ENCODE measurements at regions of chr20 and their contacts with region 1.

Region 1: GRCh38 chr20:3710703-3711483 is 1.5 kb downstream of the SIGLEC1 start:
- DNase-seq: peak; percentile 57 to 88
- ATAC-seq: peak; percentile 20 to 83; a peak in 4 of 6 replicates
- H3K4me3 ChIP-seq: no peak overlapping the region
- H3K27ac ChIP-seq: no peak overlapping the region
- H3K4me1 ChIP-seq: no peaks in the 10 kb centered on the region
- CTCF ChIP-seq: peak; percentile 90
- EP300 ChIP-seq: no peak
- POLR2A ChIP-seq: no peak
- RAD21 ChIP-seq: peak; percentile 75 to 76

Region 2: GRCh38 chr20:3340443-3340842 is 370.4 kb before region 1 on chr20:
- CTCF ChIA-PET with region 1: no interaction called
- POLR2A ChIA-PET with region 1: no interaction called
- DNase-seq: no peak
- ATAC-seq: no peak
- H3K4me3 ChIP-seq: no peak overlapping the region
- H3K27ac ChIP-seq: no peak overlapping the region
- H3K4me1 ChIP-seq: no peaks in the 10 kb centered on the region
- CTCF ChIP-seq: no peak
- EP300 ChIP-seq: no peak
- POLR2A ChIP-seq: no peak
- RAD21 ChIP-seq: no peak

Region 3: GRCh38 chr20:3515379-3516170 is 195.3 kb before region 1 on chr20:
- CTCF ChIA-PET with region 1: no interaction called
- POLR2A ChIA-PET with region 1: no interaction called
- DNase-seq: no peak
- ATAC-seq: no peak
- H3K4me3 ChIP-seq: no peak overlapping the region
- H3K27ac ChIP-seq: no peak overlapping the region
- H3K4me1 ChIP-seq: no peaks in the 10 kb centered on the region
- CTCF ChIP-seq: no peak
- EP300 ChIP-seq: no peak
- POLR2A ChIP-seq: no peak
- RAD21 ChIP-seq: no peak

Region 4: DNA sequence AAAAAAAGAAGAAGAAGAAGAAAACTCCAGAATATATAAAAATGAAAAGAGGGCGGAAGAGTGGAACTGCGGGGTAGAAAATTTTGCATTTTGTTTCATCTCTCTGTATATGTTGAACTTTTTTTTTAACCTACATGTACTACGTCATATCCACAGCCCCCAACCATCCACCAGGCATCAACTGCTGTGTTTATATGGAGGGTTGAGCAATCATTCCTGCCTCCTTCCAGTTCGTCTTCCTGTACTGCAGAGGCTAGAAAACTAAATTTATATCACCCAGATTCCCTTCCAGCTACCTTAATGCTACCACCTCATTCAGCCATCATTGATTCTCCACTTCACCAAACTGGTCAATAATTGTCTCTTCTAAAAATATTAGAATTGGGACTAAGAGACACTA is 11.0 kb after region 1 on chr20:
- CTCF ChIA-PET with region 1: interaction called, 2,233 read pairs
- POLR2A ChIA-PET with region 1: no interaction called
- DNase-seq: no peak
- ATAC-seq: no peak
- H3K4me3 ChIP-seq: no peak overlapping the region
- H3K27ac ChIP-seq: no peak overlapping the region
- H3K4me1 ChIP-seq: no peaks in the 10 kb centered on the region
- CTCF ChIP-seq: no peak
- EP300 ChIP-seq: no peak
- POLR2A ChIP-seq: no peak
- RAD21 ChIP-seq: no peak

Region 5: DNA sequence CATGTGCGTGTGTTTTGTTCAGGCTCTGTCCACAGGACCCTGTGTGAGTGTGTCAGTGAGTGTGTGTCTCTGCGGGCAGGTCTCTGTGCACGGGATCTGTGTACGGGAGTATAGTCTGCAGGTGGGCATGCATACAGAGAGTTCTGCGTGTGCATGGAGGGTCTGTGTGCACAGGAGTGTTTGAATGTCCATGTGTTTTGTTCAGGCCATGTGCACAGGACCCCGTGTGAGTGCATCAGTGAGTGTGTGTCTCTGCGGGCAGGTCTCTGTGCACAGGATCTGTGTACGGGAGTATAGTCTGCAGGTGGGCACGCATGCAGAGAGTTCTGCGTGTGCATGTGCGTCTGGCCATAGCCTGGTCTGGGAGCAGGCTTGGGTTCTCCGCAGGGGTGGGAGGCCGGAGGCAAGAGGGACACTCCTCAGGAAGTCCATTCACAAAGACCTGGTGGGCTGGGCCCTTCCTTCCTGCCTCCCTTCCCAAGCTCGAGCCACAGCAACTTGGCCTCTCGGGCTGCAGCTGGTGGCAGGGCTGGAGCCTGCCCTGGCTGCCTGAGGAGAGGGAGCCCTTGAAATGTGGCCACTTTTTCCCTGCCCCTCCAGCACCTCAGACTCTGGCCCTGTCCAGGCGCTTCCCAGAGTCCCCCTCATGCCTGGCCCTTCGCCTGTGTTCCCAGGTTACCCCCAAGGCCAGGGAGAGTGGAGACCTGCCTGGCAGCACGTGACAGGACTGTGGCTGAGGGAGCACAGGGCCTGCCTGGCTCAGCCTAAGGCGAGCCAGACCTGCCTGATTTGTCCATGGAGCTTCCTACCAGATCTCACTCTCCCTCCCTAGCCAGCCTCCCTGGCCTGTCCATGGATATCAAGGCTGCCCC is 28.4 kb after region 1 on chr20:
- CTCF ChIA-PET with region 1: interaction called, 2,233 read pairs
- POLR2A ChIA-PET with region 1: no interaction called
- DNase-seq: no peak
- ATAC-seq: peak in 1 of 2 experiments; percentile 44; a peak in 4 of 6 replicates
- H3K4me3 ChIP-seq: no peak overlapping the region
- H3K27ac ChIP-seq: peak overlapping the region in 1 of 2 experiments; percentile 34; a peak in 2 of 6 replicates
- H3K4me1 ChIP-seq: peaks cover 15% of the 10 kb centered on the region; the same call in 2 of the 3 replicates
- CTCF ChIP-seq: no peak
- EP300 ChIP-seq: no peak
- POLR2A ChIP-seq: no peak
- RAD21 ChIP-seq: no peak

Region 6: GRCh38 chr20:3753098-3753980 is 42.4 kb after region 1 on chr20:
- CTCF ChIA-PET with region 1: interaction called, 2,233 read pairs
- POLR2A ChIA-PET with region 1: no interaction called
- DNase-seq: peak; percentile 85 to 89
- ATAC-seq: peak; percentile 28 to 62; a peak in 3 of 6 replicates
- H3K4me3 ChIP-seq: no peak overlapping the region
- H3K27ac ChIP-seq: no peak overlapping the region
- H3K4me1 ChIP-seq: peaks cover 7% of the 10 kb centered on the region; the same call in 2 of the 3 replicates
- CTCF ChIP-seq: peak; percentile 81
- EP300 ChIP-seq: no peak
- POLR2A ChIP-seq: no peak
- RAD21 ChIP-seq: peak; percentile 57 to 71

Region 7: GRCh38 chr20:3767427-3768341 is 56.8 kb after region 1 on chr20 and contains the start of gene ADISSP:
- CTCF ChIA-PET with region 1: interaction called, 2,233 read pairs
- POLR2A ChIA-PET with region 1: no interaction called
- DNase-seq: peak; percentile 99
- ATAC-seq: peak; percentile 85 to 93
- H3K4me3 ChIP-seq: peak within 1 kb of the TSS; percentile 87
- H3K27ac ChIP-seq: peak within 1 kb of the TSS; percentile 86 to 92
- H3K4me1 ChIP-seq: peaks cover 20% of the 10 kb centered on the region
- CTCF ChIP-seq: no peak; the same call in 2 of the 3 replicates
- EP300 ChIP-seq: no peak
- POLR2A ChIP-seq: peak; percentile 94
- RAD21 ChIP-seq: no peak
- polyA plus RNA-seq, gene ADISSP: 43.9 and 44.0 TPM in 2 replicates